ENCODE measurements at regions of chr4 and their contacts with region 1.

Region 1: GRCh38 chr4:185134307-185134869 is 8.7 kb upstream of the SLC25A4 start:
- DNase-seq: no peak
- ATAC-seq: peak; percentile 87 to 93 (median 90)
- H3K4me3 ChIP-seq: no peak overlapping the region
- H3K27ac ChIP-seq: no peak overlapping the region
- H3K4me1 ChIP-seq: no peaks in the 10 kb centered on the region
- H3K27me3 ChIP-seq: no peaks in the 10 kb centered on the region
- CTCF ChIP-seq: peak; percentile 74 to 80 (median 77)
- POLR2A ChIP-seq: no peak

Region 2: GRCh38 chr4:184955651-184956050 is 178.7 kb before region 1 on chr4:
- intact Hi-C with region 1: no loop called
- DNase-seq: peak in 1 of 3 donors; percentile 31
- ATAC-seq: no peak
- H3K4me3 ChIP-seq: no peak overlapping the region
- H3K27ac ChIP-seq: no peak overlapping the region
- H3K4me1 ChIP-seq: peaks cover 0 to 13% (median 6%) of the 10 kb centered on the region in 4 donors
- H3K27me3 ChIP-seq: no peaks in the 10 kb centered on the region
- CTCF ChIP-seq: no peak
- POLR2A ChIP-seq: no peak

Region 3: DNA sequence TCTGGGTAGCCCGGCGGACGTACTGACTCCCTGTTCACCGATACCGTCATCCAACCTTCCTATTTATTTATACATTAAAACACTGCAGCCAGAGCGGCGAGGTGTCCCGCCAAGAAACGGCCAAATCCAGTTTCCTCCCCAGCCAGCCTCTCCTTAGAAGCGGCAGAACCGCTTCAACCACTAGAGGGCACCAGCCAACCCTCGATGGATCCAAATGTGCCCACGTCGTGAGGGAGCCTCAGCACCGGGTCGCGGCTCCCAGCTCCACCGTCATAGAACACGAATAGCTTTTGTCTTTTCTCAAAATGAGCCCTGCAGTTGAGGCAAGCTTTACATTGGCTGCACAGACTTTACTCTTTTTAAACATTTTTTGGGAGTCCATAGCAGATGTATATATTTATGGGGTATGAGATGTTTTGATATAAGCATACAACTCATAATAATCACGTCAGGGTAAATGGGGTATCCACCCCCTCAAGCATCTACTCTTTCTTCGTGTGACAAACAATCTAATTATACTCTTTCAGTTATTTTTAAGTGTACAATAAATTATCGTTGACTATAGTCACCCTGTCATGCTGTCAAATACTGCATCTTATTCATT is 129.1 kb before region 1 on chr4:
- intact Hi-C with region 1: loop called in 1 of 2 experiments (anchors 10 kb)
- DNase-seq: peak; percentile 82 to 85 (median 83)
- ATAC-seq: peak; percentile 92 to 97 (median 94)
- H3K4me3 ChIP-seq: peak overlapping the region in 2 of 3 donors; percentile 9 to 27
- H3K27ac ChIP-seq: no peak overlapping the region
- H3K4me1 ChIP-seq: peaks cover 0 to 11% (median 0%) of the 10 kb centered on the region in 4 donors
- H3K27me3 ChIP-seq: no peaks in the 10 kb centered on the region
- CTCF ChIP-seq: peak; percentile 85 to 97 (median 92)
- POLR2A ChIP-seq: no peak

Measured in right lobe of liver (tissue), 6 donors.